Activated T-helper 2 cell treated with anti-CD3 and anti-CD28 coated beads, Interferon-gamma antibody, Interleukin-2, Interleukin-4, amounts not matched to agents 10 μg/mL and 5 μg/mL and 100 μg/mL, durations not matched to agents 14 hours and 24 hours and 36 hours (primary cell): ENCODE measurements at regions of chr12 and their contacts with region 1.

Region 1: GRCh38 chr12:96985480-96986362 is 78.7 kb downstream of the NEDD1 start:
- DNase-seq: peak; percentile 22
- H3K4me3 Mint-ChIP-seq: peak overlapping the region; percentile 17
- H3K27ac Mint-ChIP-seq: no peak overlapping the region
- H3K4me1 Mint-ChIP-seq: peaks cover 5% of the 10 kb centered on the region
- H3K27me3 Mint-ChIP-seq: peaks cover 45% of the 10 kb centered on the region

Region 2: DNA sequence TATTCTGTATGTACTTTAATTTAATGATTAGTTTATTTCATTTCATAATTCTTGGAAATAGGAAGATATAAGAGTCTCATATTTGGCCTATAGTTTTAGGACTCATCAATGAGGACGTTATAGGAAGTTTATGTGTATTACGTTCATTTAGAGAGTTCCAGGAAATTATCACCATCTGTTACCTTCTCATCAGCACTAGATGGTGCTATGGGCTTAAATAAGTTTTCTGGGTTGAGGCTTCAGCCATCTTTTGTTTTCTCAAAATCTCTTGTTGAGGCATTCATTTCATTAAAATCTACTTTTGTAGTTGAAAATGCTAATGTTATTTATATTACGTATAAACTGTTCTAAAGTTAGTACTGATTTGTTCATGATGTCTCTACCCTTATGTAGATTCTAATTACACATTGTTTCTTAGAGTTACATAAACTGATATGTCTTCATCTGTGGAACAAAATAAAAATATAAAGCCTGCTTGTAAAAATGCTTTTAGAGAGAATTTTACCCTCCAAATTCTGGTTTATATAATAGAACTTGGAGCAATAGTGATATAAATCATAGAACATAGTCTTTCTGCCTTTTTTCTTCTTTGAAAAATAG is 407.1 kb before region 1 on chr12:
- intact Hi-C with region 1: loop called (anchors 1 kb)
- DNase-seq: no peak
- H3K4me3 Mint-ChIP-seq: no peak overlapping the region
- H3K27ac Mint-ChIP-seq: no peak overlapping the region
- H3K4me1 Mint-ChIP-seq: peaks cover 2% of the 10 kb centered on the region
- H3K27me3 Mint-ChIP-seq: peaks cover 14% of the 10 kb centered on the region

Region 3: GRCh38 chr12:96861656-96862055 is 124.1 kb before region 1 on chr12:
- intact Hi-C with region 1: no loop called
- DNase-seq: no peak
- H3K4me3 Mint-ChIP-seq: no peak overlapping the region
- H3K27ac Mint-ChIP-seq: no peak overlapping the region
- H3K4me1 Mint-ChIP-seq: no peaks in the 10 kb centered on the region
- H3K27me3 Mint-ChIP-seq: peaks cover 14% of the 10 kb centered on the region

Region 4: DNA sequence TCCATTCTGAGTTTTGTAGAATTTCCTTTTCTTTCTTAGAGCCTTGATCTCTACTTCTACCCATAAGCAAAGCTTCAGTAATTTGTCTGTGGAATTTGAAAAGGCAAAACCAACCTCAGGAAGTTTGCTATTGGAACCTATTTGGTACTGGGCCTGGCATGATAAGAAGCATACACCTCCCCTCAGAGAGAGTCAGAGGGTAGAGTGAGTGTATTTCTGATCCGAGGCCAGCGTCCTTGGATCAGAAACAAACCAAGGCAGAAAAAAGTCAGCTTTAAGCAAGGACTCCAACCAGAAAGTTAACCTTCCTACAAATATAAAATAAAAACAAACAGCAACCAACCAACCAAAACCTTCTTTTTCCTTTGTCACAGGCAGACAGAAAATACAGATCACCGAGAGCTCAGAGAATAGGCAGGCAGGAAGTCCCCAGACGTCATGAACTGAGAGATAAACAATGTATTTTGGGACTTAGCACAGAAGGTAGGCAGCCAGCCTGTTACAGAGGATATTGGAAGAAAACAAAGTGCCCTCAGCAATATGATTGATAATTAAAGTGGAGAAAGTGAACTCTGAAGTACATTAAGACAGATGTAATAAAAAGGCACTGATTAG is 62.8 kb after region 1 on chr12:
- intact Hi-C with region 1: no loop called
- DNase-seq: no peak
- H3K4me3 Mint-ChIP-seq: no peak overlapping the region
- H3K27ac Mint-ChIP-seq: no peak overlapping the region
- H3K4me1 Mint-ChIP-seq: no peaks in the 10 kb centered on the region
- H3K27me3 Mint-ChIP-seq: no peaks in the 10 kb centered on the region

Region 5: GRCh38 chr12:97308576-97309198 is 323.0 kb after region 1 on chr12:
- intact Hi-C with region 1: loop called (anchors 2 kb)
- DNase-seq: no peak
- H3K4me3 Mint-ChIP-seq: no peak overlapping the region
- H3K27ac Mint-ChIP-seq: no peak overlapping the region
- H3K4me1 Mint-ChIP-seq: no peaks in the 10 kb centered on the region
- H3K27me3 Mint-ChIP-seq: peaks cover 8% of the 10 kb centered on the region

Region 6: GRCh38 chr12:97404543-97404942 is 418.8 kb after region 1 on chr12:
- intact Hi-C with region 1: loop called (anchors 10 kb)
- DNase-seq: no peak
- H3K4me3 Mint-ChIP-seq: no peak overlapping the region
- H3K27ac Mint-ChIP-seq: no peak overlapping the region
- H3K4me1 Mint-ChIP-seq: no peaks in the 10 kb centered on the region
- H3K27me3 Mint-ChIP-seq: no peaks in the 10 kb centered on the region